ENCODE measurements at regions of chr17 and their contacts with region 1.

Region 1: GRCh38 chr17:67689534-67690177 is 28.1 kb upstream of the NOL11 start:
- DNase-seq: peak in 1 of 2 donors; percentile 73
- ATAC-seq: peak in 2 of 8 donors; percentile 51 to 62
- H3K4me3 ChIP-seq: no peak overlapping the region
- H3K27ac ChIP-seq: no peak overlapping the region
- H3K4me1 ChIP-seq: peaks cover 0 to 16% (median 0%) of the 10 kb centered on the region in 9 donors
- H3K27me3 ChIP-seq: no peaks in the 10 kb centered on the region
- CTCF ChIP-seq: peak; percentile 77 to 88 (median 82)

Region 2: DNA sequence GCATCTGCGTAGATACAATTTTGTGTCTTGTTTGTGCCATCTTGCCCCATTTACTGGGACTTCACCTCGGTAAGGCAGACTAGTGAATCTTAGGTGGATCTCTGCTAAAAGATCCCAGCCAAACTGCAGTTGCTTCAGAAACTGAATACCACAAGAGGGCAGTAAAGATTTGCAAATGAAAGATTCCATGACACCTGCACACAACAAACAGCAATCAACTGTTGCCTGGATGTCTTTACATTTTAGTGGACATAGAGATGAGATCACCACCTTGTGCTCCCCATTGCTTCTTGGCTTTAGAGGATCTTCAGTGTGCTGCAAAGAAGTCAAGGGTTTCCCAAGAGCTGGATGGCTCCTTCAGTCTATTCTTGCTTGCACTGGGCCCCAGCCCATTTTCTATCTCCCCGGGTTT is 973.9 kb before region 1 on chr17:
- intact Hi-C with region 1: loop called in 1 of 10 experiments (anchors 10 kb)
- DNase-seq: no peak
- ATAC-seq: peak in 6 of 8 donors; percentile 28 to 67 (median 54)
- H3K4me3 ChIP-seq: no peak overlapping the region
- H3K27ac ChIP-seq: no peak overlapping the region
- H3K4me1 ChIP-seq: peaks cover 0 to 29% (median 4%) of the 10 kb centered on the region in 9 donors
- H3K27me3 ChIP-seq: no peaks in the 10 kb centered on the region
- CTCF ChIP-seq: peak; percentile 34 to 80 (median 71)

Region 3: GRCh38 chr17:67443931-67444597 is 245.6 kb before region 1 on chr17:
- intact Hi-C with region 1: no loop called
- DNase-seq: peak in 1 of 2 donors; percentile 45
- ATAC-seq: peak in 7 of 8 donors; percentile 57 to 88 (median 76)
- H3K4me3 ChIP-seq: no peak overlapping the region
- H3K27ac ChIP-seq: peak overlapping the region in 9 of 10 donors; percentile 32 to 87 (median 70)
- H3K4me1 ChIP-seq: peaks cover 0 to 68% (median 58%) of the 10 kb centered on the region in 9 donors
- H3K27me3 ChIP-seq: no peaks in the 10 kb centered on the region
- CTCF ChIP-seq: no peak

Region 4: GRCh38 chr17:67475236-67475937 is 214.3 kb before region 1 on chr17:
- intact Hi-C with region 1: loop called in 5 of 10 experiments (anchors 5 to 10 kb)
- DNase-seq: peak; percentile 76 to 83
- ATAC-seq: peak; percentile 54 to 85 (median 70)
- H3K4me3 ChIP-seq: peak overlapping the region in 1 of 10 donors; percentile 13
- H3K27ac ChIP-seq: peak overlapping the region; percentile 54 to 88 (median 80)
- H3K4me1 ChIP-seq: peaks cover 0 to 54% (median 31%) of the 10 kb centered on the region in 9 donors
- H3K27me3 ChIP-seq: no peaks in the 10 kb centered on the region
- CTCF ChIP-seq: peak; percentile 65 to 94 (median 85)

Region 5: GRCh38 chr17:67491009-67491680 is 198.5 kb before region 1 on chr17:
- intact Hi-C with region 1: loop called in 2 of 10 experiments (anchors 10 kb)
- DNase-seq: peak; percentile 88 to 89
- ATAC-seq: peak; percentile 92 to 99 (median 95)
- H3K4me3 ChIP-seq: peak overlapping the region in 8 of 10 donors; percentile 8 to 49 (median 38)
- H3K27ac ChIP-seq: peak overlapping the region in 9 of 10 donors; percentile 35 to 81 (median 73)
- H3K4me1 ChIP-seq: peaks cover 0 to 60% (median 47%) of the 10 kb centered on the region in 9 donors
- H3K27me3 ChIP-seq: no peaks in the 10 kb centered on the region
- CTCF ChIP-seq: no peak

Region 6: GRCh38 chr17:67509390-67510289 is 180.0 kb before region 1 on chr17:
- intact Hi-C with region 1: loop called in 1 of 10 experiments (anchors 10 kb)
- DNase-seq: no peak
- ATAC-seq: peak in 7 of 8 donors; percentile 11 to 95 (median 61)
- H3K4me3 ChIP-seq: peak overlapping the region in 1 of 10 donors; percentile 8
- H3K27ac ChIP-seq: peak overlapping the region in 5 of 10 donors; percentile 17 to 83 (median 24)
- H3K4me1 ChIP-seq: peaks cover 0 to 32% (median 9%) of the 10 kb centered on the region in 9 donors
- H3K27me3 ChIP-seq: no peaks in the 10 kb centered on the region
- CTCF ChIP-seq: no peak

Region 7: DNA sequence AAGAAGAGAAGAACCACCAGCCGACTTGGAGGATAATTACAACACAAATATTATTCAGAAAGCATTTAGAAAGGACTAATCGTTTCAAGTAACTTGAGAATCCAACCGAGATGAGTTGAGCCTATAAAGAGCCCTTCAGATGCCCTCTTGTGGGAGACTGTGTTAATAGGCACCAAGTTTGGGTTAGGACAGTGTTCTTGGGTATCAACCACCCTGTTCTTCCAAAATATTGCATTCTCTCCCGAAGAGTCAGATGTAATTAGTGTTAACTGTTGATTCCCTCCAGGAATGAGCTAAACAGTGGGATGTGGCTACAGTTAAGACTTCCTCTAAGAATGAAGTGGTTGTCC is 59.7 kb before region 1 on chr17:
- intact Hi-C with region 1: loop called in 1 of 10 experiments (anchors 10 kb)
- DNase-seq: no peak
- ATAC-seq: peak in 2 of 8 donors; percentile 35 to 50
- H3K4me3 ChIP-seq: no peak overlapping the region
- H3K27ac ChIP-seq: peak overlapping the region in 2 of 10 donors; percentile 12 to 31
- H3K4me1 ChIP-seq: peaks cover 0 to 36% (median 13%) of the 10 kb centered on the region in 9 donors
- H3K27me3 ChIP-seq: no peaks in the 10 kb centered on the region
- CTCF ChIP-seq: peak in 7 of 9 donors; percentile 36 to 65 (median 53)

Region 8: DNA sequence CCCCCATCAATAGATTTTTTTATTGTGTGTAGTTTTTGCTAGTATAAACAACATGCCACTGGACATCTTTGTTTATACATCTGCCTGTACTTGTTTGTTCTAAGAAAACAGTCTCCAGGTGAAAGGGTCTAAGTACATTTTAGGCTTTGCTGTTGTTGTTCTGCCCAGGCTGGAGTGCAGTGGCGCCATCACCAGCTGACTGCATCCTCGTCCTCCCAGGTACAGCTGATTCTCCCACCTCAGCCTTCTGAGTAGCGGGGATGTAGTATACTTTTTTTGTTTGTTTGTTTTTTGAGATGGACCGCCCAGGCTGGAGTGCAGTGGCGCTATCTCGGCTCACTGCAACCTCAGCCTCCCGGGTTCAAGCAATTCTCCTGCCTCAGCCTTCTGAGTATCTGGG is 281.2 kb after region 1 on chr17:
- intact Hi-C with region 1: no loop called
- DNase-seq: no peak
- ATAC-seq: no peak
- H3K4me3 ChIP-seq: no peak overlapping the region
- H3K27ac ChIP-seq: no peak overlapping the region
- H3K4me1 ChIP-seq: no peaks in the 10 kb centered on the region
- H3K27me3 ChIP-seq: no peaks in the 10 kb centered on the region
- CTCF ChIP-seq: no peak